Motor neuron (in vitro differentiated cells): ENCODE measurements at regions of chr4 and their contacts with region 1.

Region 1: DNA sequence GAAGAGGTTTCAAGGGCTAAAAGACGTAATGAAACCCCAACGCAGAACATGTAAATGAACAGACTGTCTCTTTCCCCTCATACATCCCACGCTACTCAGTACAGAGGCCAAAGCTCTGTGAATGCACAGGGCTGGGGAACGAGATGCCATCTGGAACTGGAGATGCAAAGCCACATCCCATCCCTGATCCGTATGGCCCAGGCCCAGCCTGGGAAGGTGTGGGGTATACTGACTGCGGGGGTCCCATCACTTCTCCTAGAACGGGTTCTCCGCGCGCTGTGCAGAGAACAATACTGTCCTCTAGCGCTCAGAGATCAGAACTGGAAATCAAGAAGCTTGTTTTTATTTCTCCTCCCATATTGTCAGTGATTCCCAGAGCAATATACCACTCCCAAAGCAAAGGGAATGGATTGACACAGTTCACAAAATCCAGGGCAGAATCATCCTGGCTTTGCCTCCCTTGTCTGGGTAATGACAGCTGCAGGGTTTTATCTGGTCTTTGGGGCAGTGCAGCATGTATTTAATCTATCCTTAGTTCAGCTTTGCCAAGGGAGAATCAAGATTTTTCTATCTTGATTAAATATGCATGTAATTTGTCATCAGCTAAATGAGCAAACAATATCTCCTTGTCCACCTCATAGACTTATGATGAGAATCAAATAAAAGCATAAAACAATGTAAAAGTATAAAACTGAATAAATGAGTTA is 47.3 kb upstream of the TLR3 start:
- ATAC-seq: peak; percentile 82 to 96 (median 89)
- H3K4me3 ChIP-seq: no peak overlapping the region
- H3K27ac ChIP-seq: no peak overlapping the region
- H3K4me1 ChIP-seq: peaks cover 0 to 6% of the 10 kb centered on the region in 2 donors

Region 2: DNA sequence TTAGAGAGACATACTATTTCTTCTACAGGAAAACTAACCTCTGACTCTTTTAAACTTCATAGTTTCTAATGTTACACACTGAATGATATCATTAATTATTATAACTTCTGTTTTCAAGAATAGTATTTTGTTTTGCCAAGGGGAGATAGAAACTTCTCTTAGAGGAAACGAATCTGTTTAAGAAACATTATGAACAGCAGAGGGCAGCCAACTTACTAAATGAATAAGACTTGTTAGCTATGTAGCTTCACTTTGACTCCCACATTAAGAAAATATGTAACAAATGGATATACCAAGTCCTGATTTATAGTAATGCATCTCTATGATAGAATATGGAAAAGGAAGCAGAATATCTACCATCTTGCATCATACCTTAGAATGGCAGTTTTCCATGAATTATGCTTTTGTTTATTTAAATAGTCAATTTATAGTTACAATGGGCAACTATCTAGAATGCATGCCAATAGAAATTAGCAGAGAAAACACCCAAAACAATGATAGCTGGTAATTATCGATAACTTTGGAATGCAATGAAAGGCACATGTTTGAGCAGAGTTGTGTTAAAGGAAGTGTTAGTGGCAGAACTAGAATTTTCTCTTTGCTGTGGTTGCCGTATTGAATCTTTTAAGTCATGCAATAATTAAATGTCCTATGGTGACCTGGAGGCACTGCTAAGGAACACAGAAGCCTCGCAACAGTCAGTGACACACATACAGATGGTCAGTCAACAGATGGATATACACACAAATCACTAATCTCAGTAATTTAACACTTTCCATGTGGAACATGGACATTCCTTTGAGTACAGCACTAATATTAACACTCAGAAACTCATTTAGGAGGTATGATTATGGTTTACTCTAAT is 380.6 kb before region 1 on chr4:
- in situ Hi-C with region 1: loop called in 6 of 9 experiments (anchors 10 to 25 kb)
- ATAC-seq: peak in 6 of 8 experiments; percentile 32 to 71 (median 53)
- H3K4me3 ChIP-seq: no peak overlapping the region
- H3K27ac ChIP-seq: no peak overlapping the region
- H3K4me1 ChIP-seq: peaks cover 0 to 8% of the 10 kb centered on the region in 2 donors

Region 3: DNA sequence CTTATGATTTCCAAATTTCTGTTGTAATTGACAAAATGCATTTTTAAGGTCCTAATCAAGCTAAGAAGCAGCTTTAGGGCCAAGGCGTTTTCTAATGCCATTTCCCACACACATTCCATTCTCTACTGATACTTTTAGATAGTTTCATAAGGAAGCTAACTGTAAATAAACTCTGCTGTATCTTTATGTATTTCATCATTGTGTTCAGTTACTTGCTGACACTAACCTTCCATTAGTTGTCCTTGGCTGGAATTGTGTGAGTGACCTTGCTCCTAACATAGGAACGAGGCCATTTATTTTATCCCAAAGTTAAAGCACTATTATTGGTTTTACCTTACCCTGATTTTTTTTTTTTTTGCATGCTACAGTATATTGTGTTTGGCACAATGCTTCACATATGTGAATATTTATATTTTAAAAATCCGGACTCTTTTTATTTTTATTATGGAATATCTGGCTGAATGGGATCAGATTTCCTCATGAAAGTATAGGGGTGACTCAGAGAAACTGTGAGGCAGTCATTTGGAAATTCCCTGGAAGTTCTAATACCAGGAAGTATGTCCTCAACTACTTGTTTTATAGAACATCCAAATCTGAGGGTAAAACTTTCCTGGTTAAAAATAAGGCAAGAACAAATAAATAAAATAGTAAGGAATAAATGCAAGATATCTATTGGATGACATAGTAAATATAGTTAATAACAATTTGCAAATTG is 146.9 kb before region 1 on chr4:
- in situ Hi-C with region 1: loop called in 1 of 9 experiments (anchors 25 kb)
- ATAC-seq: peak in 3 of 8 experiments; percentile 61 to 67 (median 64)
- H3K4me3 ChIP-seq: no peak overlapping the region
- H3K27ac ChIP-seq: no peak overlapping the region
- H3K4me1 ChIP-seq: peaks cover 2 to 8% of the 10 kb centered on the region in 2 donors

Region 4: GRCh38 chr4:186149872-186150271 is 128.3 kb after region 1 on chr4:
- in situ Hi-C with region 1: no loop called
- ATAC-seq: peak in 3 of 8 experiments; percentile 10 to 59 (median 45)
- H3K4me3 ChIP-seq: no peak overlapping the region
- H3K27ac ChIP-seq: no peak overlapping the region
- H3K4me1 ChIP-seq: peaks cover 0 to 3% of the 10 kb centered on the region in 2 donors